SK-N-SH (cell line): ENCODE measurements at regions of chr18 and their contacts with region 1.

Region 1: GRCh38 chr18:63320046-63320689 is 599 bp upstream of the BCL2 start:
- DNase-seq: peak; percentile 90
- H3K4me3 ChIP-seq: peak overlapping the region; percentile 51 to 84; a peak in 3 of 4 replicates
- H3K27ac ChIP-seq: peak overlapping the region; percentile 41 to 90; a peak in 3 of 4 replicates
- H3K4me1 ChIP-seq: peaks cover 9 to 18% of the 10 kb centered on the region in 2 experiments; a peak in 3 of 4 replicates
- H3K27me3 ChIP-seq: no peaks in the 10 kb centered on the region; the same call in 1 of the 2 replicates
- CTCF ChIP-seq: no peak
- EP300 ChIP-seq: no peak
- RAD21 ChIP-seq: no peak

Region 2: DNA sequence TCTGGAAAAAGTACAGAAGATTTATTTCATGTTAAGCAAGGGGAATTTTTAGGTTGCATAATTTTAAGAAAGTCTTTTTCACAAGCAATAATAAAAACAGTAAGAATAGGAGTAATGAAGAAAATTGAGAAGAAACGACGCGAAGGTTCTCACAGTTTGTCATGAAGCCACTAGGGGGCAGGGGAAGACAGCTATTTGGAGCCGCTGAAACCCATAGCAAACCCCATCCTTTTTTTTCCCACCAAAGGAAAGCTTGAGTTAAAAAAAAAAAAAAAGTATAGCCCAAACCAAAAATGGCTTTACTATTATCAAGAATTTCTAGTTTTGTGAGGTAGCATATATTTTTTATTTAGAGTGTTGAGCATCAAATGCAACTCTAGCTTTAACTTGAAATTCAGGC is 303.9 kb before region 1 on chr18:
- CTCF ChIA-PET with region 1: interaction called, 129 read pairs
- POLR2A ChIA-PET with region 1: interaction called, 3 read pairs
- DNase-seq: peak; percentile 82
- H3K4me3 ChIP-seq: peak overlapping the region in 1 of 2 experiments; percentile 4; a peak in 1 of 4 replicates
- H3K27ac ChIP-seq: no peak overlapping the region
- H3K4me1 ChIP-seq: no peaks in the 10 kb centered on the region
- H3K27me3 ChIP-seq: peaks cover 4% of the 10 kb centered on the region; the same call in 1 of the 2 replicates
- CTCF ChIP-seq: peak; percentile 91
- EP300 ChIP-seq: no peak
- RAD21 ChIP-seq: peak; percentile 97

Region 3: GRCh38 chr18:63119647-63120046 is 200.5 kb before region 1 on chr18:
- CTCF ChIA-PET with region 1: interaction called, 23 read pairs
- POLR2A ChIA-PET with region 1: no interaction called
- DNase-seq: peak; percentile 59
- H3K4me3 ChIP-seq: no peak overlapping the region
- H3K27ac ChIP-seq: 0 out of 4 replicates have a peak overlapping the region, but pooled peaks of 1 of the 2 experiments have one; percentile 28
- H3K4me1 ChIP-seq: no peaks in the 10 kb centered on the region; a peak in 2 of 4 replicates
- H3K27me3 ChIP-seq: no peaks in the 10 kb centered on the region
- CTCF ChIP-seq: peak; percentile 45
- EP300 ChIP-seq: no peak
- RAD21 ChIP-seq: peak; percentile 73

Region 4: GRCh38 chr18:63138436-63139340 is 181.5 kb before region 1 on chr18:
- CTCF ChIA-PET with region 1: interaction called, 62 read pairs
- POLR2A ChIA-PET with region 1: no interaction called
- DNase-seq: no peak
- H3K4me3 ChIP-seq: no peak overlapping the region
- H3K27ac ChIP-seq: no peak overlapping the region
- H3K4me1 ChIP-seq: peaks cover 0 to 29% of the 10 kb centered on the region in 2 experiments; a peak in 2 of 4 replicates
- H3K27me3 ChIP-seq: no peaks in the 10 kb centered on the region
- CTCF ChIP-seq: no peak
- EP300 ChIP-seq: no peak
- RAD21 ChIP-seq: no peak

Region 5: GRCh38 chr18:63339920-63340484 is 19.8 kb after region 1 on chr18:
- CTCF ChIA-PET with region 1: interaction called, 18 read pairs
- POLR2A ChIA-PET with region 1: no interaction called
- DNase-seq: peak; percentile 49
- H3K4me3 ChIP-seq: no peak overlapping the region
- H3K27ac ChIP-seq: no peak overlapping the region
- H3K4me1 ChIP-seq: no peaks in the 10 kb centered on the region
- H3K27me3 ChIP-seq: no peaks in the 10 kb centered on the region
- CTCF ChIP-seq: peak; percentile 79
- EP300 ChIP-seq: no peak
- RAD21 ChIP-seq: peak; percentile 67

Region 6: DNA sequence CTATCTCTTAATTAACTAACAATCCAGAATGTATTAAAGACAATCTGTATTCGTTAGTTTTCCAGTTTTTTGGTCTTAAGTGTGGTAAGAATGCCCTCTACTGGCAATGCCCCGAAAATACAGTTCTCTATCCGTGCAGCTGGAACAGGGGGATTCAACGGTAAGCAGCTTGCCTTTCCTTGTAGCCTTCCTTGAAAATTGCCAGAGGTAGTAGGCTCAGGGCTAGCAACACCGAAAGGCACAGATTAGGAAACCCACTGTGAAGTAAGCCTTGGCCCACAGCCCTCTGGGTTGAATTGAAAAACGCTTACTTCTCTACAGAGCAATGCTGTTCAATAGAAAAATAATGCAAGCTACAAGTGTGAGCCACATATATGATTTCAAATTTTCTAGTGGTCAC is 119.2 kb after region 1 on chr18:
- CTCF ChIA-PET with region 1: interaction called, 12 read pairs
- POLR2A ChIA-PET with region 1: no interaction called
- DNase-seq: peak; percentile 76
- H3K4me3 ChIP-seq: peak overlapping the region in 1 of 2 experiments; percentile 28; a peak in 1 of 4 replicates
- H3K27ac ChIP-seq: no peak overlapping the region
- H3K4me1 ChIP-seq: 0 out of 4 replicates have a peak, but pooled peaks cover 0 to 6% of the 10 kb centered on the region in 2 experiments
- H3K27me3 ChIP-seq: no peaks in the 10 kb centered on the region
- CTCF ChIP-seq: peak; percentile 91
- EP300 ChIP-seq: no peak
- RAD21 ChIP-seq: peak; percentile 89